ENCODE measurements at regions of chrX and their contacts with region 1.

Region 1: DNA sequence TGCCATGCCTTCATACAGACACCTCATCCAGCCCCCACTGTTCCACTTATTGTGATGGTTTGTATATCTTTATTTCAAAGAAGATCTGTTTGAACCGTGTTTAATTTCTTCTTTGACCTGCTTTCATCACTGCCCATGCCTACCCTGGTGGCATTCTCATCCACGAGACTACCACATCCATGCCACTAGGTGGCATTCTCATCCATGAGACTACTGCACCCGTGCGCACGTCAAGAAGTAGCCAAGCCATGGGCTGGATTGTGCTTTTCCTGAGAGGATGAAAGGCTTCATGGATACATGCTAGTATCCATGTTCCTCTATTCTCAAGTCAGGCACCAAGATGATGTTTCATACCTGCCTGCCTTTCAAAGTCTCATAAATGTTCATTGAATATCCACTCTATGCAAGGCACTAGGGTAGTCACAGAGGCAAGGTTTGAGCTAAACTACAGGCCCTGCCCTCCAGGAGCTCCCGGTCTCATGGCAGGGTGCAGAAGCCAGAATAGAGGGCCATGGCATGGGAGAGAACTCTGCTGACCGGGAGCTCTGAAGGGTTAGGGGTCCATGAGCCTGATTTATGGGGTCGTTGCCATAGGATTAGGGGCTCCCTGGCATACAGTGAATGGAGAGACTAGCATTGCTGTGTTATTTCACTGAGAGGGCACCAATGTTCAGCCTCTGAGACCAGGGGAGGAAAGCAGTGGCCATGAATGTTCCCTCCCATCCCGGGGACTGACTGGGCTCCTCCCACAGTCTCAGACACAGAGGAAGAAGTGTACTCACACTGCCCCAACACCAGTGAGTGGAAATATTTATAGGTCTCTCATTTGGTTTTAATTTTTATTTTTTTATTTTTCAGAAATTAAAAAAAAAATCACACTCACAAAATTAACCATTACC is 24.8 kb upstream of the EOLA2 start:
- DNase-seq: peak; percentile 82
- H3K4me3 Mint-ChIP-seq: no peak overlapping the region
- H3K27ac Mint-ChIP-seq: peak overlapping the region; percentile 39
- H3K4me1 Mint-ChIP-seq: no peaks in the 10 kb centered on the region
- H3K27me3 Mint-ChIP-seq: peaks cover 12% of the 10 kb centered on the region
- CTCF ChIP-seq: peak; percentile 80

Region 2: DNA sequence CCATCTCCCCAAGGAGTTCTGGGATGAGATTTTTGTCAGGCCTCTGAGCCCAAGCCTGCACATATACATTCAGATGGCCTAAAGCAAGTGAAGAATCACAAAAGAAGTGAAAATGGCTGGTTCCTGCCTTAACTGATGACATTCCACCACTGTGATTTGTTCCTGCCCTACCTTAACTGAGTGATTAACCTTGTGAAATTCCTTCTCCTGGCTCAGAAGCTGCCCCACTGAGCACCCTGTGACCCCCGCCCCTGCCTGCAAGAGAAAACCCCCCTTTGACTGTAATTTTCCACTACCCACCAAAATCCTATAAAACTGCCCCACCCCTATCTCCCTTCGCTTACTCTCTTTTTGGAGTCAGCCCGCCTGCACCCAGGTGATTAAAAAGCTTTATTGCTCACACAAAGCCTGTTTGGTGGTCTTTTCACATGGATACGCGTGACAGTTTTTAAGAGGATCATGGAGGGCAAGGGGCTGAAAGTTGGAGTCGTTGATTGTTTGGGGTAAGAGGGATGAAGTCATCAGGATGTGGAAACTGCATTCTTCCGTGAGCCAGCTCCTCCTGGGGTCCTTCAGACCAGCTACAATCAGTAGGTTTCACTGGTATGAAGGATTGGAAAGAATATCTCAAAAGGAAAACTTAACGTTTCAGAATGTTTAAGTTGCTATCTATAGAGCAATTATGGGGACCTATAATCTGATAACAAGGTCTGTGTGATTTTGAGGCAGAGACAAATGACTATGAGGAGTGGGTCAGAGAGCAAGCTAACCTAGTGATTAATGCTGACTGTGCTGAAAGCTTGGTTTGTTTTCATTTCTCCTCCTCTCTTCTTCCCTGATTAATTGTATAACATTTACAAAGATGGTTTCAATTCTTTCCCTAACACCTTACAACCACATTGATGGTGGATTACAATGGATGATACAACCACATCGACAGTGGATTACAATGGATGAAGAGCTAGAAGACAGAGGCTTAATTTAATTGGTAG is 279.9 kb before region 1 on chrX:
- CTCF ChIA-PET with region 1: no interaction called
- POLR2A ChIA-PET with region 1: no interaction called
- intact Hi-C with region 1: no loop called
- DNase-seq: no peak
- H3K4me3 Mint-ChIP-seq: no peak overlapping the region
- H3K27ac Mint-ChIP-seq: no peak overlapping the region
- H3K4me1 Mint-ChIP-seq: no peaks in the 10 kb centered on the region
- H3K27me3 Mint-ChIP-seq: no peaks in the 10 kb centered on the region
- CTCF ChIP-seq: no peak

Region 3: GRCh38 chrX:150200820-150201287 is 237.7 kb after region 1 on chrX:
- CTCF ChIA-PET with region 1: interaction called, 4 read pairs
- POLR2A ChIA-PET with region 1: no interaction called
- intact Hi-C with region 1: loop called (anchors 2 kb)
- DNase-seq: peak; percentile 100
- H3K4me3 Mint-ChIP-seq: no peak overlapping the region
- H3K27ac Mint-ChIP-seq: peak overlapping the region; percentile 51
- H3K4me1 Mint-ChIP-seq: peaks cover 55% of the 10 kb centered on the region
- H3K27me3 Mint-ChIP-seq: no peaks in the 10 kb centered on the region
- CTCF ChIP-seq: no peak

Region 4: DNA sequence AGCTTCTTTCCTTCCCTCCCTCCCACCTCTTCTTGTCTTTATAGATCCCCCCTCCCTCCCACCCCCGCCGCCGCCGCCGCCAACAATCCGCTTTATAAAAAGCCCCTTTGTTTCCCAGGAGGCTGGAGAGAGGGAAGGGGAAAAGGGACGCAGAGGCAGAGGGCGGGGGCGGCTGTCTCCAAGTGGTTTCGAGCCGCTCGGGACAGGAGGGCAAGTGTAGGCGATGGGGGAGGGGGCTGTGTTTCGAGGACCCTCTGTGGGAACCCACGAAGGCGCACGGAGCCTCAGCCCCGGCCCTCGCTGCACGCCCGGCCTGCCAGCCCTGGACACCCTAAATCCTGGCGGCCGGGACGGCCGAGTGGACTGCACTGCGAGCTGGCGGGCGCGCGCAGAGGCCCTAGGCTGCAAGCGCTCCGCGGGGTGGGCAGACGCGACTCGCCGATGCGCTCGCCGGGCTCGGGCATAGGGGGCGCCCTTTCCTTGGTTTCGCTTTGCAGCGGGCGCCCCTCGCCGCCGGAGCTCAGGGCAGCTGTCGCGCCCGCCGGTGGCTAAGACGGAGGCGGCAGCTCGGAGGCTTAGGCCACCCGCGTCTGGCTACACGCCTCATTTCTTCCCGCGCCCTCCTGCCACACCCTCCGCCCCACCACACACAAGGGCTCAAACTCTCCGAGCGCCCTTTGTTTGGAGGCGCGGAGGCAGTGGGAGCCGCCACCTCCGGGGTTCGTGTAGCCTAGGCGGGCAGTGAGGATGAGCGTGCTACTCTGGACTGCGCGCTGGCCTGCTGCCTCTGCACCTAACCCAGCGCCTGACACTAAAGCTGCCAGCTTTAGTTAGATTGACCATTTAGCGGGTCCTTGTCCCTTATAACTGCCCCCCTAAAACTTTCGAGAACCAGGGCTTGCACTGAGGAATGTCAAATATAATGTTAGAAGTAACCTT is 402.2 kb after region 1 on chrX:
- CTCF ChIA-PET with region 1: interaction called, 6 read pairs
- POLR2A ChIA-PET with region 1: no interaction called
- intact Hi-C with region 1: loop called (anchors 1 kb)
- DNase-seq: peak; percentile 51
- H3K4me3 Mint-ChIP-seq: peak overlapping the region; percentile 72
- H3K27ac Mint-ChIP-seq: no peak overlapping the region
- H3K4me1 Mint-ChIP-seq: peaks cover 13% of the 10 kb centered on the region
- H3K27me3 Mint-ChIP-seq: peaks cover 7% of the 10 kb centered on the region
- CTCF ChIP-seq: peak; percentile 44

Region 5: DNA sequence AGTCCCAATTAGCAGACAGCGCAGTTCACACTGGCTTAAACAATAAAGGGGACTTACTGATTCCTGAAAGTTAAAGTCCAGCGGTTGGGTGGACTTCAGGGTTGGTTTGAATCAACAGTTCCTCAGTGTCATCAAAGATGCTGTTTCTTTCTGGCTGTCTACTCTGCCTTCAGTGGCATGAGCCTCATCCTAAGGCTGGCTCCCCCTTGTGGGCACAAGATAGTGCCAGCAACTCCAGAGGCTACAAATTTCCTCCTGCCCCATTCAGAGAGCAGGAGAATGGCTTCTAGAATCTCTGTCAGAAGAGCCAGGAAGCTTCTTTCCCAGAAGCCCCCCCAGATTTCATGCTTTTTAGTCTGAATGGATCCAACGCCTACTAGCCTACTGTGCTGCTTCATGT is 522.9 kb after region 1 on chrX:
- CTCF ChIA-PET with region 1: interaction called, 13 read pairs
- POLR2A ChIA-PET with region 1: no interaction called
- intact Hi-C with region 1: loop called (anchors 1 kb)
- DNase-seq: peak; percentile 71
- H3K4me3 Mint-ChIP-seq: no peak overlapping the region
- H3K27ac Mint-ChIP-seq: no peak overlapping the region
- H3K4me1 Mint-ChIP-seq: peaks cover 21% of the 10 kb centered on the region
- H3K27me3 Mint-ChIP-seq: no peaks in the 10 kb centered on the region
- CTCF ChIP-seq: peak; percentile 62

Region 6: DNA sequence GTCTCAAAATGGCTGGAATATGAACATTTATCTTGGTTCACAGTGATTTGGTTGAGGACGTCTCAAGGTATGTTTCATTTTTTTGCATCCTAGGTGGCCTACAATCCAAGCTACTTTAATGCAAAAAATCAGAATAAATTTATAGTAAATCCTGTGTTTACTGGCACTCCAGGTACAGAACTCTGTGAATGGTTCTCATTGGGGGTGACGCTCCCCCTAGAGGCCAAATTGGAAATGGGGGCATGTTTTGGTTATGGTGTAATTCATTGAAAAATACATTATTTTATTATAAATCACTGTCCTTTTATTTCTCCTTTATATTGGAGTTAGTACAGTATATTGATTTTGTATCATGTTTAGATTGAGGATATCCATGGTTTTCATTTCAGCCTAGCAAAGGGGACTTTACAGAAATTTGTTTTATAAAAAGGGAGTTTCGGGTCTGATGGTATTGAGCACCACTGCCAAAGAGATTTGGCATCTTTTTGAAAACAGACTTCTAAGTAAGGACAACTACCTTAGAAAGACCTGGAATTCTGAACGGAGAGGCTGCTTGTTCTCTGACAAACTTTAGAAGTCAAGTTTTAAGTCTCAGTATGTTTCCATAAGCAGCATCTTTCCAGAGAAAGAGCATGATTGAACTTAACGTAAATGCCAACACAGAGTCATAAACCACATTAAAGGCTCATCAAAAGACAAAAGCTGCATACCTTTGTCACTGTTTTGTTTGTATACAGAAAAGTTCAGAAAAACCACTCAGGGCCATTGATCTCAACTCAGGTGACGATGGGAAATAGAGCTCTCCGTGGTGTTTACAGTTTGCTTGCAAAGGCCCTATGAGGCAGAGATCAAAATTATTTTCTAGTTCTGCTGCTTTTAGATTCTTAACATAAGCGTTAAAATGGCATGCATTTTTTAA is 624.7 kb after region 1 on chrX:
- CTCF ChIA-PET with region 1: interaction called, 3 read pairs
- POLR2A ChIA-PET with region 1: no interaction called
- intact Hi-C with region 1: loop called (anchors 2 kb)
- DNase-seq: peak; percentile 61
- H3K4me3 Mint-ChIP-seq: no peak overlapping the region
- H3K27ac Mint-ChIP-seq: no peak overlapping the region
- H3K4me1 Mint-ChIP-seq: no peaks in the 10 kb centered on the region
- H3K27me3 Mint-ChIP-seq: no peaks in the 10 kb centered on the region
- CTCF ChIP-seq: peak; percentile 44

Region 7: DNA sequence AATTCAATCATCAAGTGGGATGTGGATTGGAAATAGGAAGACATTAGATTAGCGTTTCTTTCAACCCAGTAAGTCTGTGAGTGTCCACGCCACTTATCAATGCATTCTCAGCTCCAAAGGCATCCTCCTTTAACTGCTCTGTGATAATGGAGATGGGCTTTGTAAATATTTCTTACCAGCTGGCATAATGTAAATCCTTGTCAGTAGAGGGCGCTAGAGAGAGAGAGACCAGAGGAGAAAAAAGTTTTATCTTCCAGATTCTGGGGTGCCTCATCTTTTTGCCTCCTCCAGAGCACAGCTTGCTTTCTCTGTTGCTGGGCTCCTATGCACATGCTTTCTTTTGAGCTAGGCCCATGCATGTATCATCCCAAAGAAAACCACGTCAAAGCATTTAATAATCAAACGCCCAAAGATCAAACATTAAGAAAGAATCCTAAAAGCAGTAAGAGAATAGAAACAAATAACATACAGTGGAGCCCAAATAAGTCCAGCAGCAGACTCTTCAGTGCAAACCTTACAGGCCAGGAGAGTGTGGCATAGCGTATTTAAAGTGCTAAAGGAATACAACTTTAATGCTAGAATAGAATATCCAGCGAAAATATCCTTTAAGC is 720.5 kb after region 1 on chrX:
- CTCF ChIA-PET with region 1: interaction called, 4 read pairs
- POLR2A ChIA-PET with region 1: no interaction called
- intact Hi-C with region 1: loop called (anchors 1 kb)
- DNase-seq: peak; percentile 71
- H3K4me3 Mint-ChIP-seq: no peak overlapping the region
- H3K27ac Mint-ChIP-seq: no peak overlapping the region
- H3K4me1 Mint-ChIP-seq: no peaks in the 10 kb centered on the region
- H3K27me3 Mint-ChIP-seq: peaks cover 10% of the 10 kb centered on the region
- CTCF ChIP-seq: peak; percentile 54

Region 8: GRCh38 chrX:150715184-150715583 is 752.1 kb after region 1 on chrX:
- CTCF ChIA-PET with region 1: interaction called, 10 read pairs
- POLR2A ChIA-PET with region 1: no interaction called
- intact Hi-C with region 1: loop called (anchors 2 kb)
- DNase-seq: peak; percentile 15
- H3K4me3 Mint-ChIP-seq: no peak overlapping the region
- H3K27ac Mint-ChIP-seq: no peak overlapping the region
- H3K4me1 Mint-ChIP-seq: no peaks in the 10 kb centered on the region
- H3K27me3 Mint-ChIP-seq: peaks cover 19% of the 10 kb centered on the region
- CTCF ChIP-seq: no peak

Measured in MCF 10A (cell line).